ENCODE measurements at regions of chr1 and their contacts with region 1.

Region 1: GRCh38 chr1:224329842-224330753 is at the start of gene NVL:
- DNase-seq: peak; percentile 93
- H3K4me3 Mint-ChIP-seq: peak within 1 kb of the TSS; percentile 100
- H3K27ac Mint-ChIP-seq: peak within 1 kb of the TSS; percentile 99
- H3K4me1 Mint-ChIP-seq: peaks cover 46% of the 10 kb centered on the region
- H3K27me3 Mint-ChIP-seq: no peaks in the 10 kb centered on the region
- total RNA-seq, gene NVL: 41.4 and 52.4 TPM in 2 replicates

Region 2: GRCh38 chr1:224113918-224114786 is 215.9 kb before region 1 on chr1 and contains the start of gene FBXO28:
- intact Hi-C with region 1: loop called (anchors 1 kb)
- DNase-seq: peak; percentile 98
- H3K4me3 Mint-ChIP-seq: peak within 1 kb of the TSS; percentile 88
- H3K27ac Mint-ChIP-seq: peak within 1 kb of the TSS; percentile 84
- H3K4me1 Mint-ChIP-seq: peaks cover 23% of the 10 kb centered on the region
- H3K27me3 Mint-ChIP-seq: peaks cover 15% of the 10 kb centered on the region
- total RNA-seq, gene FBXO28: 26.0 and 26.3 TPM in 2 replicates

Region 3: GRCh38 chr1:224182866-224183590 is 147.1 kb before region 1 on chr1 and contains the start of gene DEGS1:
- intact Hi-C with region 1: loop called (anchors 1 kb)
- DNase-seq: peak; percentile 95
- H3K4me3 Mint-ChIP-seq: peak within 1 kb of the TSS; percentile 96
- H3K27ac Mint-ChIP-seq: peak within 1 kb of the TSS; percentile 97
- H3K4me1 Mint-ChIP-seq: peaks cover 45% of the 10 kb centered on the region
- H3K27me3 Mint-ChIP-seq: peaks cover 3% of the 10 kb centered on the region
- total RNA-seq, gene DEGS1: 51.8 and 56.3 TPM in 2 replicates

Region 4: GRCh38 chr1:224356685-224357625 is 26.9 kb after region 1 on chr1 and contains the start of gene CNIH4:
- intact Hi-C with region 1: loop called (anchors 1 kb)
- DNase-seq: peak; percentile 97
- H3K4me3 Mint-ChIP-seq: peak within 1 kb of the TSS; percentile 80
- H3K27ac Mint-ChIP-seq: peak within 1 kb of the TSS; percentile 92
- H3K4me1 Mint-ChIP-seq: peaks cover 38% of the 10 kb centered on the region
- H3K27me3 Mint-ChIP-seq: no peaks in the 10 kb centered on the region
- total RNA-seq, gene CNIH4: 77.2 and 78.1 TPM in 2 replicates

Region 5: GRCh38 chr1:224542783-224543440 is 212.8 kb after region 1 on chr1:
- intact Hi-C with region 1: no loop called
- DNase-seq: peak; percentile 75
- H3K4me3 Mint-ChIP-seq: no peak overlapping the region
- H3K27ac Mint-ChIP-seq: peak overlapping the region; percentile 39
- H3K4me1 Mint-ChIP-seq: peaks cover 18% of the 10 kb centered on the region
- H3K27me3 Mint-ChIP-seq: peaks cover 14% of the 10 kb centered on the region